ENCODE measurements at regions of chr15 and their contacts with region 1.

Region 1: GRCh38 chr15:78394026-78394425 is 44.0 kb upstream of the IREB2 start:
- DNase-seq: no peak
- H3K4me3 Mint-ChIP-seq: no peak overlapping the region
- H3K27ac Mint-ChIP-seq: no peak overlapping the region
- H3K4me1 Mint-ChIP-seq: no peaks in the 10 kb centered on the region
- H3K27me3 Mint-ChIP-seq: peaks cover 36% of the 10 kb centered on the region
- CTCF ChIP-seq: no peak

Region 2: GRCh38 chr15:78340231-78341056 is 53.6 kb before region 1 on chr15 and contains the start of gene CRABP1:
- CTCF ChIA-PET with region 1: no interaction called
- intact Hi-C with region 1: no loop called
- DNase-seq: peak; percentile 43
- H3K4me3 Mint-ChIP-seq: peak within 1 kb of the TSS; percentile 54
- H3K27ac Mint-ChIP-seq: no peak within 1 kb of the TSS
- H3K4me1 Mint-ChIP-seq: no peaks in the 10 kb centered on the region
- H3K27me3 Mint-ChIP-seq: peaks cover 10% of the 10 kb centered on the region
- CTCF ChIP-seq: no peak
- total RNA-seq, gene CRABP1: 0.51 TPM in 1 of 2 replicates, not detected in the other

Region 3: DNA sequence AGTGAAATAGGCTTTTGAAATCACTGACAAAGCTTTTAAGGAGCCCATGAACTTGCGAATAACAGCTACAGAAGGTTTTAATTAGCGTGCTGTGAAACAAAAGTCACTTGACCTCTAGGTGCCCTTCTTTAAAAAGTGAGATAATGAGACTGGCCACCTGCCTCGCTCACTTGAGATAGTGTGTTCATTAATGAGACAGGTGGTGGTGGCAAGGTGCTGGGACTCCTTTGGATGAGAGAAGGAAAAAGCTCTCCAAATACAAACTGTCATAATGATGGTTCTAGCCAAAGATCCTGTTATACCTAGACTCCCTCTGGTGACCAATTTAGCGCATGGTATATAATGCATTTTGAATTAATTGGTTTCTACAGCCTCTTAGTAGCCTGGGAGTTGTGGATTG is 21.3 kb after region 1 on chr15:
- CTCF ChIA-PET with region 1: interaction called, 10 read pairs
- intact Hi-C with region 1: no loop called
- DNase-seq: peak; percentile 10
- H3K4me3 Mint-ChIP-seq: no peak overlapping the region
- H3K27ac Mint-ChIP-seq: no peak overlapping the region
- H3K4me1 Mint-ChIP-seq: peaks cover 10% of the 10 kb centered on the region
- H3K27me3 Mint-ChIP-seq: no peaks in the 10 kb centered on the region
- CTCF ChIP-seq: peak; percentile 33